PC-3 (cell line): ENCODE measurements at regions of chr1 and their contacts with region 1.

Region 1: GRCh38 chr1:247681288-247681897 is 1.9 kb upstream of the OR13G1 start:
- DNase-seq: peak; percentile 98
- ATAC-seq: peak; percentile 90
- H3K4me3 ChIP-seq: no peak overlapping the region
- H3K27ac ChIP-seq: no peak overlapping the region
- H3K4me1 ChIP-seq: no peaks in the 10 kb centered on the region
- H3K27me3 ChIP-seq: no peaks in the 10 kb centered on the region
- CTCF ChIP-seq: peak; percentile 99

Region 2: GRCh38 chr1:247448107-247448791 is 233.1 kb before region 1 on chr1:
- CTCF ChIA-PET with region 1: no interaction called
- POLR2A ChIA-PET with region 1: no interaction called
- intact Hi-C with region 1: no loop called
- DNase-seq: peak; percentile 71
- ATAC-seq: peak; percentile 85
- H3K4me3 ChIP-seq: peak overlapping the region; percentile 64
- H3K27ac ChIP-seq: no peak overlapping the region
- H3K4me1 ChIP-seq: peaks cover 6% of the 10 kb centered on the region; the same call in 1 of the 2 replicates
- H3K27me3 ChIP-seq: peaks cover 20% of the 10 kb centered on the region
- CTCF ChIP-seq: 0 out of 2 replicates have a peak, but pooled peaks have one; percentile 39

Region 3: DNA sequence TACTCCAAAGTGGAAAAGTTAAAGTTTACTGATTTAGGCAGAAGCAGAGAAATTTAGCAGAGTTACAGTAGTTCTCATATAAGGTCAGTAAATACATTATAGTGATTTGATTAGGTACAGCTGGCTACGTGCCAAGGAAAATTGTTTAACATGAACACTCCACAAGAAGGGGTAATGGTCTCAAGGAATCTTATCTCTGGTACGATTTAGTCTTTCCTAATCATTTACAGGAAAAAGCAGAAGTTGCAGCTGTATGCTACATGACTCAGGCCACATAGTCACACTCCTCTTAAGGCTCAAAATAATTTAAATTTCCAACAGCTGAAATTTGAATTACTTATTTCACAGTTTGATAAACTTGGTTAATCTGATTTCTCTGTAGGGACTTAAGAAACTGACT is 186.6 kb before region 1 on chr1:
- CTCF ChIA-PET with region 1: no interaction called
- POLR2A ChIA-PET with region 1: no interaction called
- intact Hi-C with region 1: loop called (anchors 5 kb)
- DNase-seq: peak; percentile 18
- ATAC-seq: no peak
- H3K4me3 ChIP-seq: no peak overlapping the region
- H3K27ac ChIP-seq: no peak overlapping the region
- H3K4me1 ChIP-seq: peaks cover 11% of the 10 kb centered on the region
- H3K27me3 ChIP-seq: peaks cover 36% of the 10 kb centered on the region
- CTCF ChIP-seq: no peak

Region 4: GRCh38 chr1:247812637-247813036 is 131.2 kb after region 1 on chr1:
- CTCF ChIA-PET with region 1: no interaction called
- POLR2A ChIA-PET with region 1: no interaction called
- intact Hi-C with region 1: loop called (anchors 1 kb)
- DNase-seq: peak; percentile 87
- ATAC-seq: peak; percentile 84
- H3K4me3 ChIP-seq: no peak overlapping the region
- H3K27ac ChIP-seq: no peak overlapping the region
- H3K4me1 ChIP-seq: peaks cover 8% of the 10 kb centered on the region
- H3K27me3 ChIP-seq: no peaks in the 10 kb centered on the region
- CTCF ChIP-seq: no peak

Region 5: DNA sequence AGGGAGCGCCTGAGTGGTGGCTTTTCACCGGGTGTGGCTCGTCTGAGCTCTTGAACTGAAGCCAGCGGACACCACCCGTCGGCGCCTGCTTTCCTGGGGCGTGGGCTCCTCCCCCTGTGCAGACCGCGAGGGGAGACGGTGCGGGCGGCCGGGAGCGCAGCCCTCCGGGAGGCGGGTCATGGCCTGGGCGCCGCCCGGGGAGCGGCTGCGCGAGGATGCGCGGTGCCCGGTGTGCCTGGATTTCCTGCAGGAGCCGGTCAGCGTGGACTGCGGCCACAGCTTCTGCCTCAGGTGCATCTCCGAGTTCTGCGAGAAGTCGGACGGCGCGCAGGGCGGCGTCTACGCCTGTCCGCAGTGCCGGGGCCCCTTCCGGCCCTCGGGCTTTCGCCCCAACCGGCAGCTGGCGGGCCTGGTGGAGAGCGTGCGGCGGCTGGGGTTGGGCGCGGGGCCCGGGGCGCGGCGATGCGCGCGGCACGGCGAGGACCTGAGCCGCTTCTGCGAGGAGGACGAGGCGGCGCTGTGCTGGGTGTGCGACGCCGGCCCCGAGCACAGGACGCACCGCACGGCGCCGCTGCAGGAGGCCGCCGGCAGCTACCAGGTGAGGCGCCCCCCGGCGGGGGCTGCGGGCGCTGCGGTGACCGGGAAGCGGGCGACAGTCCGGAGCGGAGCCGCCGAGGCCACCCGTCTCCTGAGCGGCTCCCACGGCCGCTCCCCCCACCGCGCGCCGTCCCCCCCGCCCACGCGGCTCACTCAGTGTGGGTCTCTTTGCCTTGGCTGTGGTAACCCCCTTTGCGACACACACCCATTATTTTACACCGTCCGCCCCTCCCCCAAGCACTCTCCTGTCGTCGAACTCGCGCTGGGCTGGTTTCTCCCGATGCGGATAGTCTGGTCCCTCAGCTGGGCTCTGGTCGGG is 175.9 kb after region 1 on chr1 and contains the start of gene TRIM58:
- CTCF ChIA-PET with region 1: interaction called, 6 read pairs
- POLR2A ChIA-PET with region 1: no interaction called
- intact Hi-C with region 1: loop called (anchors 1 kb)
- DNase-seq: peak; percentile 96
- ATAC-seq: peak; percentile 83
- H3K4me3 ChIP-seq: peak within 1 kb of the TSS; percentile 72
- H3K27ac ChIP-seq: peak within 1 kb of the TSS; percentile 62
- H3K4me1 ChIP-seq: peaks cover 26% of the 10 kb centered on the region
- H3K27me3 ChIP-seq: no peaks in the 10 kb centered on the region
- CTCF ChIP-seq: peak; percentile 85
- total RNA-seq, gene TRIM58: 22.7 and 46.9 TPM in 2 replicates

Region 6: GRCh38 chr1:247914941-247915662 is 233.7 kb after region 1 on chr1:
- CTCF ChIA-PET with region 1: no interaction called
- POLR2A ChIA-PET with region 1: no interaction called
- intact Hi-C with region 1: loop called (anchors 1 kb)
- DNase-seq: peak; percentile 93
- ATAC-seq: peak; percentile 90
- H3K4me3 ChIP-seq: peak overlapping the region; percentile 39
- H3K27ac ChIP-seq: peak overlapping the region; percentile 45
- H3K4me1 ChIP-seq: peaks cover 25% of the 10 kb centered on the region
- H3K27me3 ChIP-seq: no peaks in the 10 kb centered on the region
- CTCF ChIP-seq: no peak

Region 7: DNA sequence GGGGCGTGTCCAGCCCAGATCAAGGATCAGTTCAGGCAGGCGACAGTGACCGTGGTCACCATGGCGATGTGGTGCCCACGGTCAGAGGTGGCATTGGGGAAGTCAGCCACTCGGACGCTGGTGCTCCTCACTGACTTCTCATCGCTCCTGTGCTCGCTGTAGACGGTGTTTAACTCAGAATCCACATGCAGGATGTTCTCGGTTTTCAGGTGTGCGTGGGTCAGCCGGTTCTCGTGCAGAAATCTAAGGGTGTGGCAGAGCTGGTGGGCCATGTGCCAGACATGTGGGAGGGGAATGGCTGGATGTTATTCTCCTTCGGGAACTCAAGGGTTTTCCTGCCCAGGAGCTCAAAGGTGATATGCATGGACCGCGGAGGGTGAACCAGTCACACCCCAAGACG is 255.0 kb after region 1 on chr1:
- CTCF ChIA-PET with region 1: no interaction called
- POLR2A ChIA-PET with region 1: no interaction called
- intact Hi-C with region 1: loop called (anchors 5 kb)
- DNase-seq: peak; percentile 19
- ATAC-seq: no peak
- H3K4me3 ChIP-seq: no peak overlapping the region; the same call in 1 of the 2 replicates
- H3K27ac ChIP-seq: no peak overlapping the region
- H3K4me1 ChIP-seq: peaks cover 4% of the 10 kb centered on the region; the same call in 1 of the 2 replicates
- H3K27me3 ChIP-seq: no peaks in the 10 kb centered on the region
- CTCF ChIP-seq: no peak

Region 8: DNA sequence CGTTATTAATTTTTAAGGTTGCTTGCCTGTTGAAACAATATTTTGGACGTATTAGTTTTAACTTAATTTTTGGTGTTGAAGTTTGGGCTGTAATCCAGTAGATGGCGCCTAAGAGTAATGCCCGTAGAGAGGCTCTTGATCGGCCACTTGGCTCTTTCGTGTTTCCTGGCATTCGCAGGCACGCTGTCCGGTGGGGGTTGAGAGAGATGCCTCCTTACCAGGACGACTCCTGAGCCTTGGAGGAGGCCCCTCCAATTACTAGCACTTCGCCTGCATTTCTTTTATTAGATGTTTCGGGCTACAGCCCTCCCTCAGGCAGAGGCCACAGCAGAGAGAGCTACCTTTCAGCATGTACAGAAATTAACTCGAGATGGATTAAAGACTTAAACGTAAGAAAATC is 561.8 kb after region 1 on chr1:
- CTCF ChIA-PET with region 1: no interaction called
- POLR2A ChIA-PET with region 1: no interaction called
- intact Hi-C with region 1: loop called (anchors 10 kb)
- DNase-seq: peak; percentile 86
- ATAC-seq: peak; percentile 85
- H3K4me3 ChIP-seq: peak overlapping the region; percentile 37; the same call in 1 of the 2 replicates
- H3K27ac ChIP-seq: no peak overlapping the region
- H3K4me1 ChIP-seq: no peaks in the 10 kb centered on the region
- H3K27me3 ChIP-seq: peaks cover 5% of the 10 kb centered on the region; the same call in 1 of the 2 replicates
- CTCF ChIP-seq: peak; percentile 94